ENCODE measurements at regions of chr20 and their contacts with region 1.

Region 1: DNA sequence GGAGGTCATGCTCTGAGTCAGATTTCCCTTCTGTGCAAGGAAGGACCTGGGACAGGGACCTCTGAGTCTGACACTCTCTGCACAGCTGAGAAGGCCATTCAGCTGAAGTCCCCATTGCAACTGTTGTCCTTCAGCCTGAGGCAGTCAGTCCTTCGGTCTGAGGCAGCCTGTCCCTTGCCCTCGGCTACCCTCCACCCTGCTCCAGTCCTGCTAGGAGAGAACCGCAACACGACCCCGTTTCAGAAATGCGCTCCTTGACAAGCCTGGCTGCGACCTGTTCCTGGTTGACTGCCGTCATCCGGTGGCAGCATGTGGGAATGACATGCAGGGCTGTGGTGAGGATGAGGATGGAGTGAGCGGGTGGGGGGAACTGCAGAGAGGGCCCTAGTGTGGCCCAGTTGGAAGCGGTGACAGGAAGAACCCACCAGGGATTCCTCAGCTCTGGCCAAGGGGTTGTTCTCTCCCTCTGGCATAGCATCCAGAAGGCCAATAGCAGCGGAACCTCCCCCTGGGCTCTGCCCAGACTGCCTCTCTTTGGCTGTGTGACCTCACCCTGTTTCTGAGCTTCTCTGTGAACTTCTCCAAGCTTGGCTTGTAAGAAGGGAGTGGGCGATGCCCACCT is 40.3 kb upstream of the ANGPT4 start:
- DNase-seq: peak; percentile 87
- H3K4me3 ChIP-seq: peak overlapping the region in 1 of 2 experiments; percentile 13; a peak in 1 of 4 replicates
- H3K27ac ChIP-seq: no peak overlapping the region
- H3K4me1 ChIP-seq: peaks cover 0 to 3% of the 10 kb centered on the region in 2 experiments; a peak in 1 of 4 replicates
- H3K27me3 ChIP-seq: no peaks in the 10 kb centered on the region; the same call in 1 of the 2 replicates
- CTCF ChIP-seq: peak; percentile 99
- EP300 ChIP-seq: no peak
- RAD21 ChIP-seq: peak; percentile 98

Region 2: GRCh38 chr20:815914-816606 is 140.4 kb before region 1 on chr20:
- CTCF ChIA-PET with region 1: interaction called, 267 read pairs
- POLR2A ChIA-PET with region 1: interaction called, 3 read pairs
- DNase-seq: peak; percentile 76
- H3K4me3 ChIP-seq: no peak overlapping the region; a peak in 1 of 4 replicates
- H3K27ac ChIP-seq: no peak overlapping the region
- H3K4me1 ChIP-seq: no peaks in the 10 kb centered on the region
- H3K27me3 ChIP-seq: no peaks in the 10 kb centered on the region
- CTCF ChIP-seq: peak; percentile 98
- EP300 ChIP-seq: no peak
- RAD21 ChIP-seq: peak; percentile 95

Region 3: GRCh38 chr20:844473-845225 is 111.8 kb before region 1 on chr20:
- CTCF ChIA-PET with region 1: interaction called, 23 read pairs
- POLR2A ChIA-PET with region 1: no interaction called
- DNase-seq: peak; percentile 99
- H3K4me3 ChIP-seq: peak overlapping the region; percentile 50 to 65
- H3K27ac ChIP-seq: peak overlapping the region; percentile 38 to 89; a peak in 2 of 4 replicates
- H3K4me1 ChIP-seq: peaks cover 0 to 50% of the 10 kb centered on the region in 2 experiments; a peak in 1 of 4 replicates
- H3K27me3 ChIP-seq: no peaks in the 10 kb centered on the region
- CTCF ChIP-seq: no peak
- EP300 ChIP-seq: peak in 1 of 2 experiments; percentile 14; a peak in 1 of 4 replicates
- RAD21 ChIP-seq: no peak

Region 4: DNA sequence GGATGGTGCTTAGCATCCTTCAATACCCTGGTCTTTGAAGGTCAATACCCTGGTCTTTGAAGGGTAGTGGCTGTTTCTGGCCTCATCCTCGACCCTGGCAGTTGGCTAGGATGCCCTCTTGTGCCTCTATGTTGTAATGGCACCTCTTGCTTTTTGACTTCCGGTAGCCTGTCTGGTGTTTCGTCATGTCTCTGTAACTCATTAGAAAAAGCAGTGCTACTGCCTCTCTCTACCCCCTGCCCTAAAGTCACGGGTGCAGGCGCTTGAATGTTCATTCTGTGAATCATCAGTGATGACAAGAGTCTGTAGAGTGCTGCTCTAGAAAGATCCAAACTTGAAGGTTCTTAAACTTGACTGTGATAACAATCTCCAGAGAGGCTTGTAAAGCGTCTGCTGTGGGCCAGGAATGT is 17.3 kb after region 1 on chr20:
- CTCF ChIA-PET with region 1: interaction called, 146 read pairs
- POLR2A ChIA-PET with region 1: no interaction called
- DNase-seq: peak; percentile 55
- H3K4me3 ChIP-seq: no peak overlapping the region
- H3K27ac ChIP-seq: no peak overlapping the region
- H3K4me1 ChIP-seq: peaks cover 0 to 10% of the 10 kb centered on the region in 2 experiments; a peak in 1 of 4 replicates
- H3K27me3 ChIP-seq: peaks cover 5% of the 10 kb centered on the region; the same call in 1 of the 2 replicates
- CTCF ChIP-seq: peak; percentile 45
- EP300 ChIP-seq: no peak
- RAD21 ChIP-seq: peak; percentile 50

Region 5: GRCh38 chr20:995170-995569 is 38.7 kb after region 1 on chr20:
- CTCF ChIA-PET with region 1: interaction called, 17 read pairs
- POLR2A ChIA-PET with region 1: no interaction called
- DNase-seq: no peak
- H3K4me3 ChIP-seq: no peak overlapping the region
- H3K27ac ChIP-seq: no peak overlapping the region
- H3K4me1 ChIP-seq: no peaks in the 10 kb centered on the region
- H3K27me3 ChIP-seq: peaks cover 3% of the 10 kb centered on the region; the same call in 1 of the 2 replicates
- CTCF ChIP-seq: no peak
- EP300 ChIP-seq: no peak
- RAD21 ChIP-seq: no peak

Region 6: DNA sequence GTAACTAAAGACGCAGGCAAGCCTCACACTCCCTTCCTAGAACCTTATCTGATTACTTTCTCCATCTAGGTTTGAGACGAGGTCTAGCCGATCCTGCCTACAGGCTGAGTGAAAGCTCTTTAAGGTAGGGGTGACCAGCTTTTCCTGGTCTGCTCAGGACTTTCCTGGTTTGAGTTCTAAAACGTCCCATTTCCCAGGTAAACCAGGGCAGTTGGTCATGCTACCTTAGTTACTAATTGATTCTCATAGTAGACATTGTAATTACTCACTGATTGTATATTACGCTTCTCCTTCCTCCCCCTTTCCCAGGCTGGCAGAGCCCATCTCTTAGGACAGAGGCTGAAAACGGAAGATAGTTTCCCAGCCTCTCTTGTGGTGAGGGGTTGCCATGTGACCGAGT is 73.5 kb after region 1 on chr20:
- CTCF ChIA-PET with region 1: no interaction called
- POLR2A ChIA-PET with region 1: no interaction called
- DNase-seq: no peak
- H3K4me3 ChIP-seq: no peak overlapping the region
- H3K27ac ChIP-seq: no peak overlapping the region
- H3K4me1 ChIP-seq: no peaks in the 10 kb centered on the region
- H3K27me3 ChIP-seq: no peaks in the 10 kb centered on the region
- CTCF ChIP-seq: no peak
- EP300 ChIP-seq: no peak
- RAD21 ChIP-seq: no peak

Region 7: DNA sequence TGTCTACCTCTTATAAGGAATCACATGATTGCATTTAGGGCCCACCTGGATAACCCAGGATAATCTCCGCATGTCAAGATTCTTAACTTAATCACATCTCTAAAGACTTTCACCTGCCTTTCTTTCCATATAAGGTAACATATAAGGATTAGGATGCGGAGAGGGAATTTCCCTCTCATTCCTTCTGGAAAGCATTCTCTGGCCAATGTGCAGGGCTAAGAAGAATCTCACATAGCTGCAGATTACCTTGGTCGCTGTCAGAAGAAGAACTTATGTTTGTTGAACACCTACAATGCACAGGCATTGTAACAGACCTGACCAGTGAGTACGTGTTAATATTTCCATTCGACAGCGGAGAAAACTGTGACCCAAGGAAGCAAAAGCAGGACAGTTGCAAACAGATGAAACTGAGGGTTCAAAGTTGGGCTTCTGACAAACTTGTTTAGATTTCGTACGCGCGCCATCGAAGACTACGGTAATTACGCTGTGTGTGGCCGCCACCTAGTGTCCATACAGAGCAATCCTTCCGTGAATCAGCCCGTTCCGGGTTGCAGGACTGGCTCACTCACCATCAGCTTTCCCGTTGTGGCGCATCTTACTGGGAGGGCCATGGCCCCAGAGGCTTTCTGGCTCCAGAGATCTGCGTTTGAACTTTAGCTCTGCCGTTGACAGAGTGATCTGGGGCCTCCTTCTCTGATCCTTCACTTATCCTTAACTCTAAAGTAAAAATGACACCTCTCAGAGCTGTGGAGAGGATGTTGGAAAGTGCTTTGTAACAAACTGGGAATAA is 256.4 kb after region 1 on chr20:
- CTCF ChIA-PET with region 1: interaction called, 12 read pairs
- POLR2A ChIA-PET with region 1: no interaction called
- DNase-seq: peak; percentile 74
- H3K4me3 ChIP-seq: no peak overlapping the region; a peak in 1 of 4 replicates
- H3K27ac ChIP-seq: no peak overlapping the region
- H3K4me1 ChIP-seq: no peaks in the 10 kb centered on the region; a peak in 1 of 4 replicates
- H3K27me3 ChIP-seq: no peaks in the 10 kb centered on the region; the same call in 1 of the 2 replicates
- CTCF ChIP-seq: peak; percentile 77
- EP300 ChIP-seq: no peak
- RAD21 ChIP-seq: peak; percentile 82